Ovary (tissue), 10 donors: ENCODE measurements at regions of chr1 and their contacts with region 1.

Region 1: GRCh38 chr1:105793536-105794146 is 1262.8 kb upstream of the PRMT6 start:
- DNase-seq: peak; percentile 54 to 76 (median 66)
- H3K4me3 ChIP-seq: no peak overlapping the region
- H3K27ac ChIP-seq: no peak overlapping the region
- H3K4me1 ChIP-seq: no peaks in the 10 kb centered on the region
- H3K27me3 ChIP-seq: no peaks in the 10 kb centered on the region
- CTCF ChIP-seq: peak; percentile 41 to 77 (median 63)
- EP300 ChIP-seq: no peak
- POLR2A ChIP-seq: no peak

Region 2: GRCh38 chr1:104787866-104788510 is 1005.7 kb before region 1 on chr1:
- intact Hi-C with region 1: loop called in 1 of 4 experiments (anchors 5 kb)
- DNase-seq: no peak
- H3K4me3 ChIP-seq: no peak overlapping the region
- H3K27ac ChIP-seq: no peak overlapping the region
- H3K4me1 ChIP-seq: no peaks in the 10 kb centered on the region
- H3K27me3 ChIP-seq: no peaks in the 10 kb centered on the region
- CTCF ChIP-seq: no peak
- EP300 ChIP-seq: no peak
- POLR2A ChIP-seq: no peak

Region 3: GRCh38 chr1:105386489-105386888 is 407.2 kb before region 1 on chr1:
- intact Hi-C with region 1: no loop called
- DNase-seq: no peak
- H3K4me3 ChIP-seq: no peak overlapping the region
- H3K27ac ChIP-seq: no peak overlapping the region
- H3K4me1 ChIP-seq: no peaks in the 10 kb centered on the region
- H3K27me3 ChIP-seq: no peaks in the 10 kb centered on the region
- CTCF ChIP-seq: no peak
- EP300 ChIP-seq: no peak
- POLR2A ChIP-seq: no peak

Region 4: DNA sequence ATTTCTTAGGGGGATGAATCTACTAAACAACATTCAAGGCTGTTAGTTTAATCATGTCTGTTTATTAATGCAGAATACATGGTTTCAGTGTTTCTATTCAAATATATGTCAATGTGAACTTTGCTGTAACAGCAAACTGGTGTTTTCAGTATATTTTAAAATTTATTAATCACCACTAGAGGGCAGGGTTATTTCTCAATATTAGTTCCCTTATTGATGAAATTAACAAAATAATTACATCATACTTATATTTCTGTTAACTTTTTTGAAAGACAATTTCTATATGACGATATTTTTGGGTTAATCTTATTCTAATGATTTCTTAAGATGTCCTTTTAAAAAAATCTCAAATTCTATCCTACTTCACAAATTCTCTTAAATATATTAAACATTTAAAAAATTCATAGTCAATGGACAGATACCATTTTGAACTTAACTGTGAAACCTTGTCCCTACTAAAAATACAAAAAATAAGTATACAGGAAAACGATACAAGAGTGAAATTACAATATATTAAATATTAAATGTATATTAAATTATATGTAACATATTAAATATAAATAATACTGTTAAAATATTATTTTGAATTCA is 228.8 kb after region 1 on chr1:
- intact Hi-C with region 1: no loop called
- DNase-seq: no peak
- H3K4me3 ChIP-seq: no peak overlapping the region
- H3K27ac ChIP-seq: no peak overlapping the region
- H3K4me1 ChIP-seq: no peaks in the 10 kb centered on the region
- H3K27me3 ChIP-seq: no peaks in the 10 kb centered on the region
- CTCF ChIP-seq: no peak
- EP300 ChIP-seq: no peak
- POLR2A ChIP-seq: no peak